ENCODE measurements at regions of chr17 and their contacts with region 1.

Region 1: GRCh38 chr17:17041571-17042380 is 481 bp upstream of the MPRIP start:
- DNase-seq: peak; percentile 94
- H3K4me3 Mint-ChIP-seq: peak overlapping the region; percentile 80
- H3K27ac Mint-ChIP-seq: no peak overlapping the region
- H3K4me1 Mint-ChIP-seq: peaks cover 38% of the 10 kb centered on the region
- H3K27me3 Mint-ChIP-seq: peaks cover 2% of the 10 kb centered on the region

Region 2: DNA sequence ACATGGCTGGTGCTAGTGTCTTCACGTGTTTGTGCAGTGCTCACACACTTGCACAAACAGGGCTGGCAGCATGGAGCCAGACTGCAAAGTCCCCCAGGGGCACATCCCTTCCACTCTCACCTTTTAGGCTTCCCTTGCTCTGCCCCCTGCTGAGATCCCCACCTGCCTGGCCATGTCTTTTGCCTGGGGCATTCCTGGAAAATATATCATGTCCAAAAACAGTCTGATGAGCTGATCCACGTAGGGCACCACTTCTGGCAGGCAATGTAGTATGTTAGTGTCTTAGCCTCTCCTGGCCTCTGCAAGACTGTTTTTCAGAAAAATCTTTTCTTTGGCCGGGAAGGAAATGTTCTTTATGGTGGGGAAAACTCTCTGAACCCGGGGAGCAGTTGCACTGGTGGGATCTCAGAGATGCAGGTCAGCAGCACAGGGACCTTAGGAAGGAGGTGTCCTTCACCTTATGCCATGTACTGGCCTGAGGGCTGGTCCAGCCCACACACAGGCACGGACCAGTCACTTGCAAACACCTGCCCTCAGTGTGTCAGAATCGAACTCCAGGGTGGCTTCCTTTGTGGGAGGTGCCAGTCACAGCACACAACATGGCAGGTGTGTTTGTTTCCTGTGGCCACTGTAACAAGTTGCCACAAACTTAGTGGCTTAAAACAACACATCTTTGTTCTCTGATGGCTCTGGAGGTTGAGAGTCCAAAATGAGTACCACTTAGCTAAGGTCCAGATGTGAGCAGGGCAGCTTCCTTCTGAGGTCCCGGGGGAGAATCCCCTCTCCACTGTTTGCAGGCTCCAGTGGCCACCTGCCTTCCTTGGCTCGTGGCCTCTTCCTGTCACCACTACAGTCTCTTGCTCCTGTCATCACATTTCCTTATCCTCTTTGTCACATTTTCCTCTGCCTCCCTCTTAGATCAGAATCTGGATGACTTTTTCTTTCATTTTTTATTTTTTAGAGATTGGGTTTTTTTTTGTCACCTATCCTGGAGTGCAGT is 47.0 kb after region 1 on chr17:
- intact Hi-C with region 1: loop called (anchors 1 kb)
- DNase-seq: no peak
- H3K4me3 Mint-ChIP-seq: no peak overlapping the region
- H3K27ac Mint-ChIP-seq: peak overlapping the region; percentile 79
- H3K4me1 Mint-ChIP-seq: peaks cover 19% of the 10 kb centered on the region
- H3K27me3 Mint-ChIP-seq: no peaks in the 10 kb centered on the region

Region 3: GRCh38 chr17:17119533-17119932 is 77.8 kb after region 1 on chr17:
- intact Hi-C with region 1: loop called (anchors 2 kb)
- DNase-seq: peak; percentile 50
- H3K4me3 Mint-ChIP-seq: peak overlapping the region; percentile 39
- H3K27ac Mint-ChIP-seq: peak overlapping the region; percentile 92
- H3K4me1 Mint-ChIP-seq: peaks cover 76% of the 10 kb centered on the region
- H3K27me3 Mint-ChIP-seq: no peaks in the 10 kb centered on the region

Region 4: GRCh38 chr17:17179371-17179827 is 137.6 kb after region 1 on chr17:
- intact Hi-C with region 1: loop called (anchors 2 kb)
- DNase-seq: peak; percentile 39
- H3K4me3 Mint-ChIP-seq: peak overlapping the region; percentile 84
- H3K27ac Mint-ChIP-seq: peak overlapping the region; percentile 97
- H3K4me1 Mint-ChIP-seq: peaks cover 76% of the 10 kb centered on the region
- H3K27me3 Mint-ChIP-seq: no peaks in the 10 kb centered on the region

Region 5: GRCh38 chr17:17206124-17206912 is 164.5 kb after region 1 on chr17 and contains the start of gene PLD6:
- intact Hi-C with region 1: loop called (anchors 1 kb)
- DNase-seq: peak; percentile 80
- H3K4me3 Mint-ChIP-seq: peak within 1 kb of the TSS; percentile 87
- H3K27ac Mint-ChIP-seq: peak within 1 kb of the TSS; percentile 93
- H3K4me1 Mint-ChIP-seq: no peaks in the 10 kb centered on the region
- H3K27me3 Mint-ChIP-seq: no peaks in the 10 kb centered on the region
- total RNA-seq, gene PLD6: 18.5 and 20.5 TPM in 2 replicates

Region 6: DNA sequence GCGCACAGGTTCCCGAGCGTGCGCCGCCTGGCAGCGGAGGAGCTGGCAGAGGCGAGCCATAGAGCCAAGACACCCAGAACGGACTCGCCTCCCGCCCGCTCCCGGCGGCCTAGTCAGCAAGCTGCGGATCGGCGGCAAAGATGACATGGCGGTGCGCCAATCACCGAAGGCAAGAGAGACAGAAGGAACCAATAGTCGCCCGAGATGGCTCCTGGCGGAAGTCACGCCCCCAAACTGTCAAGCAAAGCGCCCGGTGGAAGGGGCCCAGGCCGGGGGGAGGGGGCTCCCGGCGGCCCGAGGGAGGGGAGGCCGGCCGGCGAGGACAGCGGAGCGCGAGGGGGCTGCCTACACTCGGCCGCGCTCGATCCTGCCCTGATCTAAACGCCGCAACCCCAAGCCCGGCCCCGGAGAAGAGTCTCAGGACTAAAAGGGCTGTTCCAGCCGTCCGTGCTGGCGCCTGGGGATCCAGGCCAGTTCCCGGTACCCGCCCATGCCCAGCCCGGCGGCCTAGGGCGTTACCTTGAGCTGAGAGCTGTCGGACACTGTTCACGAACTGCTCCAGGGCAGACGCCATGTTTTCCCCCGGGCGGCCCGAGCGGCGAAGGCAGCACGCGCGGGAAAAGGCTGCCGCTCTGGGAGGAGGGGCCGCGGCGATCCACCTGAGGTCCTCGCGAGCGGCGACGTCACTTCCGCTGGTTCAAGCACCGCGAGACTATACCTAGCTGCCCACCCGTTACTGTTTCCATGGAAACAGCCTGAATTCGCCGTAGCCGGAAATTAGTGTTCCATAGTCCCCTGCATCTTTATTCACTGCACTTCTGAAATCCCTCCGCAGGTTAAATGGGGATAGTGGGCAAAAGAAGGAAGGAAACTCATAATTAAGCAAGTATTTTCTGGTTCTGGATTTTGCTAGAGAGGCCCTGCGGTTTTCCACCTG is 239.1 kb after region 1 on chr17 and contains the start of gene COPS3:
- intact Hi-C with region 1: loop called (anchors 1 kb)
- DNase-seq: peak; percentile 95
- H3K4me3 Mint-ChIP-seq: peak within 1 kb of the TSS; percentile 91
- H3K27ac Mint-ChIP-seq: peak within 1 kb of the TSS; percentile 94
- H3K4me1 Mint-ChIP-seq: peaks cover 36% of the 10 kb centered on the region
- H3K27me3 Mint-ChIP-seq: no peaks in the 10 kb centered on the region
- total RNA-seq, gene COPS3: 122 and 131 TPM in 2 replicates